PC-3 (cell line): ENCODE measurements at regions of chr13 and their contacts with region 1.

Region 1: DNA sequence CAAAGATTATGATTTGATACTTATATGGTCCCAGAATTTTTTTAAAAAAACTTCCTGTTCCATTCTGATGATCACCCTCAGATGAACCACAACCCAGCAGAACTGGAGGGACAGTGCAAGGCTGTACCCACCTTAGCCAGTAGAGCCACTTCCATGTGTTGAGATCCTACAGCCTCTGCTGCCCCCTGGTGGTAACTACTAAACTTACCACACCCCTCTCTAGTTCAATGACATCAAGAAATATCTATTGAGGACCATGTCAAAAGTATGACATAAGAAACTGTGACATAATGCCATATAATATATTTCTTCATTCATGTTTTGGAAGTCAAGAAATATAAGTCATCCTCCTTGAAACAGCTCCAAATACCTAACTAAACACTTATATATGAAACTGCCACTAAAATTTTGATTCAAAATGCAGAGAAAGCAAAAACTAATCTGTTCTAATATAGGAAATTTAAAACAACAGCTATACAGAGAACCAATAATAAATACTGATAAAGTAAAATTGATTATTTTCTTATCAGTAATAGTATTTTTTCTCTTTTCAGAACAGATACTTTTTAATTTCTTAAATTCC is 412.6 kb downstream of the KCTD12 start:
- DNase-seq: peak; percentile 79
- ATAC-seq: peak; percentile 93
- H3K4me3 ChIP-seq: no peak overlapping the region
- H3K27ac ChIP-seq: no peak overlapping the region
- H3K4me1 ChIP-seq: no peaks in the 10 kb centered on the region
- H3K27me3 ChIP-seq: no peaks in the 10 kb centered on the region
- CTCF ChIP-seq: peak; percentile 80

Region 2: DNA sequence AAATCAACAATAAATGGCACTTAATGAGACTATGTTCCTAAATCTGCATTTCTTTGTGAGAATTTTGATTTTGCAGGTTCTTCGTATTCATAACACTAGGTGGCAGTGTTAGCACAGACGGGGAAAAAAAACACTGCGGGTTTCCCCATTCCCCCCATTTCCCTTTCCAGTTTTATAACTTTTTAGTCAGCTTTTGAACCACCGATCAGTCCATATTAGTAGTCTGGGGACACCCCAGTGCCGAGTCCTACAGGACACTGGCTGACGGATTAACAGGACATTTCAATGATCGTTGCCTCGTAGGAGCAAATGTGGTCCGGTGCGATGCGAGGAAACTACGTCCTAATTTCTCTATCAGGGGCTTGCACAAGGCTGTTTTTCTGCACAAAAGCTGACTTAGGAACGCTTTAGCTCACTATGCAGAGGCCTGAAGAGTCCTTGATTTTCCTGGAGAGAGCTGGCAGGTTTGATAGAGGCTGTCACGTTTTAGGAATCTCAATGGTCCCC is 603.2 kb before region 1 on chr13:
- CTCF ChIA-PET with region 1: no interaction called
- POLR2A ChIA-PET with region 1: no interaction called
- intact Hi-C with region 1: loop called (anchors 1 kb)
- DNase-seq: peak; percentile 56
- ATAC-seq: peak; percentile 30
- H3K4me3 ChIP-seq: peak overlapping the region; percentile 84
- H3K27ac ChIP-seq: no peak overlapping the region
- H3K4me1 ChIP-seq: peaks cover 6% of the 10 kb centered on the region
- H3K27me3 ChIP-seq: no peaks in the 10 kb centered on the region
- CTCF ChIP-seq: peak; percentile 82

Region 3: DNA sequence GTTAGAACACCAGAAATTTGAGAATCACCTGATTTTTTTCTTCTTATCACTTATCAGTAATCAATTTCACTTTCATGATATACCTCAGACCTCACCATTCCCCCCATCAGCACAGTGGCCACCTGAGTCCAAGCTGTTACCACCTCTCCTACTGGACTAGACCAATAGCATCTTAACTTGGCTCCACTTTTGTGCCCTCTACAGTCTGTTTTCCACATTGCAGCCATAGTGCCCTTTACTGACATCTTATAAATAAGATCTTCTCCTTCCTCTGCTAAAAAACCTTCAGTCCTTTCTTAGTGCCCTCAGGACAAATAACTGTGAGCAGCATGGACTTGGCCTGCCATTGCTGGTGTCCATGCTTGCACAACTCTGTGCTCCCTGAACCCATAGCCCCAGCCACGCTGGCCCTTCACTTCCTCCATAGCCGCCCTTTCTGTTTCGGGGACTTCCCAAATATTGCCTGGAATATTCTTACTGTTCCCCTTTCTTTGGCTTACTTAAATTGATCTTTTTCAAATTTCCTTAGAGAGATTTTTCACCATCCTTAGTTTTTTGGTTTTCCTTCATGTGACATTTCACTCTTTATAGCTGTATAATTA is 456.7 kb before region 1 on chr13:
- CTCF ChIA-PET with region 1: no interaction called
- POLR2A ChIA-PET with region 1: no interaction called
- intact Hi-C with region 1: loop called (anchors 5 kb)
- DNase-seq: peak; percentile 67
- ATAC-seq: peak; percentile 18; the same call in 1 of the 2 replicates
- H3K4me3 ChIP-seq: no peak overlapping the region
- H3K27ac ChIP-seq: no peak overlapping the region
- H3K4me1 ChIP-seq: peaks cover 47% of the 10 kb centered on the region
- H3K27me3 ChIP-seq: no peaks in the 10 kb centered on the region
- CTCF ChIP-seq: peak; percentile 64

Region 4: GRCh38 chr13:76440568-76440967 is 33.1 kb before region 1 on chr13:
- CTCF ChIA-PET with region 1: no interaction called
- POLR2A ChIA-PET with region 1: no interaction called
- intact Hi-C with region 1: no loop called
- DNase-seq: no peak
- ATAC-seq: no peak
- H3K4me3 ChIP-seq: no peak overlapping the region
- H3K27ac ChIP-seq: no peak overlapping the region
- H3K4me1 ChIP-seq: peaks cover 5% of the 10 kb centered on the region; the same call in 1 of the 2 replicates
- H3K27me3 ChIP-seq: no peaks in the 10 kb centered on the region
- CTCF ChIP-seq: no peak